GM12878 (cell line): ENCODE measurements at regions of chr4 and their contacts with region 1.

Region 1: GRCh38 chr4:47010912-47011446 is 17.6 kb upstream of the GABRA4 start:
- DNase-seq: peak; percentile 54
- ATAC-seq: peak; percentile 86
- H3K4me3 ChIP-seq: no peak overlapping the region
- H3K27ac ChIP-seq: peak overlapping the region; percentile 8; the same call in 1 of the 2 replicates
- H3K4me1 ChIP-seq: peaks cover 4% of the 10 kb centered on the region; the same call in 1 of the 2 replicates
- H3K27me3 ChIP-seq: no peaks in the 10 kb centered on the region
- CTCF ChIP-seq: no peak
- EP300 ChIP-seq: peak; percentile 38 to 51; a peak in 2 of 4 replicates
- POLR2A ChIP-seq: no peak
- RAD21 ChIP-seq: no peak

Region 2: GRCh38 chr4:46937493-46937892 is 73.5 kb before region 1 on chr4:
- CTCF ChIA-PET with region 1: interaction called, 19 read pairs
- POLR2A ChIA-PET with region 1: no interaction called
- RAD21 ChIA-PET with region 1: interaction called, 18 read pairs
- SMC1A ChIA-PET with region 1: interaction called, 33 read pairs
- in situ Hi-C with region 1: no loop called
- intact Hi-C with region 1: no loop called
- DNase-seq: no peak
- ATAC-seq: 0 out of 3 replicates have a peak, but pooled peaks have one; percentile 42
- H3K4me3 ChIP-seq: no peak overlapping the region
- H3K27ac ChIP-seq: no peak overlapping the region
- H3K4me1 ChIP-seq: no peaks in the 10 kb centered on the region
- H3K27me3 ChIP-seq: no peaks in the 10 kb centered on the region
- CTCF ChIP-seq: peak in 2 of 3 experiments; percentile 12 to 41; a peak in 2 of 6 replicates
- EP300 ChIP-seq: no peak
- POLR2A ChIP-seq: no peak
- RAD21 ChIP-seq: peak; percentile 50

Region 3: DNA sequence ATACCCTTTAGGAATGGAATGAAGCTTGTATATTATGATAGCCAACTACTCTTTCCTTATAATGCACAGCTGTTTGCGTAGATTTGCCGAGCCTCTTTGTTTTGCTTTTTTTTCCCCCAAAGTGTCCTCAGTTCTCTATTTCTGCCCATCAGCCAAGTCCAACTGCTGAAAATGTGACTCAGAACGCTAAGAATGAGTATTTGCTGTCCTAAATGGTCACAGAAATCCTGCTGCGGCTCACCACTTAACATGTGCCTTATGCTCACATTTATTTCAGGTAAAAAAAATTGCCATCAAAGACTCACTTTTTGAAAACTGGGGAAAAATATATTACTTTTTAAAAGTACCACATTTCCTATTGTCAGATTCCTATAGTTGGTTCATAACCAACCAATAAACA is 54.5 kb before region 1 on chr4:
- CTCF ChIA-PET with region 1: no interaction called
- POLR2A ChIA-PET with region 1: interaction called, 11 read pairs
- RAD21 ChIA-PET with region 1: interaction called, 4 read pairs
- SMC1A ChIA-PET with region 1: interaction called, 9 read pairs
- in situ Hi-C with region 1: no loop called
- intact Hi-C with region 1: no loop called
- DNase-seq: no peak
- ATAC-seq: no peak
- H3K4me3 ChIP-seq: no peak overlapping the region
- H3K27ac ChIP-seq: no peak overlapping the region
- H3K4me1 ChIP-seq: no peaks in the 10 kb centered on the region
- H3K27me3 ChIP-seq: no peaks in the 10 kb centered on the region
- CTCF ChIP-seq: no peak
- EP300 ChIP-seq: no peak
- POLR2A ChIP-seq: no peak
- RAD21 ChIP-seq: no peak

Region 4: DNA sequence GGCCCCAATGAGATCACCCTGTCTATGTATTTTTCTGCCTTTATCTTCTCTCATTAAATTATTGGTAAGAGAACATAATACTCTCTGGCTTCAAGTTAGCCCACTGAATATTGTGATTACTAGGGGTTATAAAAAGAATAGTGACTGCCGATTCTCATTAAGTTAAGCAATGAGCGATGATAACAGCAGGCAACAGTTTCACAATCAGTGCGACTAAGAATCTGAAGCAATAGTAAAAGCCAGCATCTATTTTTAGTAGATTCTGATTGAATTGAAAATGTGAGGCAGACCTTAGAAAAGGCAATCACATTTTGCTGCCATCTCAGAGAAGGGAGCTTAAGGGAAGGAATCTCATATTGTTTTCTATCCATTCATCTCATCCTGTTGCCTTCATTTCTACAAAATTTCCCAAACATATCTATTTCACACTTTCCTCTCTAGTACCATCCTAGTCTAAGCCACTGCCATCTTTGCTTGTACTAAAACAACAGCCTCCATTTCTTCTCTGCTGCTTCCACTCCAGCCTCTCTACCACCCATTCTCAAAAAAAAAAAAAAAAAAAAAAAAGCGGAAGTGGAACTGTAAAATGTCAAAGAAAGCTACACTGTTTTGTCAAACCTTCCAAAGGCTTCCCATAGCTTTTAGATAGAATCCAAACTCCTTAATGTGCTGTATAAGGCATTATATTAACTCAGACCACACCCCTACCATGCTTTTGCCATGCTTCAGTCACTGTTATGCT is 35.0 kb before region 1 on chr4:
- CTCF ChIA-PET with region 1: interaction called, 4 read pairs
- POLR2A ChIA-PET with region 1: interaction called, 5 read pairs
- RAD21 ChIA-PET with region 1: interaction called, 30 read pairs
- SMC1A ChIA-PET with region 1: interaction called, 20 read pairs
- in situ Hi-C with region 1: no loop called
- intact Hi-C with region 1: no loop called
- DNase-seq: peak; percentile 23
- ATAC-seq: peak; percentile 75
- H3K4me3 ChIP-seq: no peak overlapping the region
- H3K27ac ChIP-seq: peak overlapping the region; percentile 58
- H3K4me1 ChIP-seq: no peaks in the 10 kb centered on the region
- H3K27me3 ChIP-seq: no peaks in the 10 kb centered on the region; a peak in 1 of 4 replicates
- CTCF ChIP-seq: no peak
- EP300 ChIP-seq: 0 out of 4 replicates have a peak, but pooled peaks of 1 of the 2 experiments have one; percentile 11
- POLR2A ChIP-seq: no peak
- RAD21 ChIP-seq: no peak

Region 5: GRCh38 chr4:46986922-46987638 is 23.9 kb before region 1 on chr4:
- CTCF ChIA-PET with region 1: interaction called, 5 read pairs
- POLR2A ChIA-PET with region 1: interaction called, 6 read pairs
- RAD21 ChIA-PET with region 1: interaction called, 28 read pairs
- SMC1A ChIA-PET with region 1: interaction called, 132 read pairs
- in situ Hi-C with region 1: no loop called
- intact Hi-C with region 1: no loop called
- DNase-seq: no peak
- ATAC-seq: peak; percentile 55; the same call in 2 of the 3 replicates
- H3K4me3 ChIP-seq: no peak overlapping the region
- H3K27ac ChIP-seq: no peak overlapping the region
- H3K4me1 ChIP-seq: no peaks in the 10 kb centered on the region
- H3K27me3 ChIP-seq: no peaks in the 10 kb centered on the region
- CTCF ChIP-seq: no peak
- EP300 ChIP-seq: no peak
- POLR2A ChIP-seq: no peak
- RAD21 ChIP-seq: no peak

Region 6: GRCh38 chr4:46993075-46994006 is 17.6 kb before region 1 on chr4 and contains the start of gene GABRA4:
- CTCF ChIA-PET with region 1: interaction called, 21 read pairs
- POLR2A ChIA-PET with region 1: interaction called, 10 read pairs
- RAD21 ChIA-PET with region 1: interaction called, 28 read pairs
- SMC1A ChIA-PET with region 1: interaction called, 132 read pairs
- in situ Hi-C with region 1: no loop called
- intact Hi-C with region 1: no loop called
- DNase-seq: no peak
- ATAC-seq: peak; percentile 71
- H3K4me3 ChIP-seq: no peak within 1 kb of the TSS
- H3K27ac ChIP-seq: no peak within 1 kb of the TSS
- H3K4me1 ChIP-seq: no peaks in the 10 kb centered on the region
- H3K27me3 ChIP-seq: peaks cover 6 to 9% of the 10 kb centered on the region in 2 experiments
- CTCF ChIP-seq: no peak
- EP300 ChIP-seq: no peak
- POLR2A ChIP-seq: no peak
- RAD21 ChIP-seq: no peak
- polyA plus RNA-seq, gene GABRA4: 1.3 to 2.4 TPM

Region 7: DNA sequence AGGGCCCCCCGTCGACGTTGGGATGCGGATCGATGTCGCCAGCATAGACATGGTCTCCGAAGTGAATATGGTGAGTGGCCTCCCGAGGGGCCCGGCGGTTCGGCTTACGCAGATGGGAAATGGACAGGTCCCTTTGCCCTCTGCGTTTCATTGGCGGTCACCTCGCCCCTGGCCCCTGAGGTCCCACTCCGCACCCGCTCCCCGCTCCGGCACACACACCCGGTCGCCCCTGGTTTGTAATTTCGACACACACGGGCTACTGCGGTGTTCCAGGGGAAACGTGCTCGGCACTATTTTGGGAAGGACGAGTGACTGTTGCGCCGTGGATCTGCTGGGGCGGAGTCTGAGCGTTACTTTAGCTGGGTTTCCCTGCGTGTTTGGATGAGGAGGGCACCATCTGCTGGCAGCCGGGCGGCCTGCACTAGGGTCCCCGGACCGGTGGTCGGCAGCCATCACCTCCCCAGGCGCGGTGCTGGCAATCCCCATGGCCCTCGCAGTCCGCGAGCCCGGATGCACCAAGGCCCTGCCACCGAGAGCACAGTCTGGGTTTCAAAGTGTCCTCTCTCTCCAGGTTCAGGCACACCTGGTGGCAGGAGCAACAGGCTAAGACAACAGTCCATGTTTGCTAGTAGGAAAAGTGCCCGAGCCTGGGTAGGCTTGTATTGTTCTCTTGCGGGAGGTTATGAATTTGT is 21.6 kb after region 1 on chr4:
- CTCF ChIA-PET with region 1: interaction called, 21 read pairs
- POLR2A ChIA-PET with region 1: no interaction called
- RAD21 ChIA-PET with region 1: interaction called, 16 read pairs
- SMC1A ChIA-PET with region 1: interaction called, 6 read pairs
- in situ Hi-C with region 1: no loop called
- intact Hi-C with region 1: no loop called
- DNase-seq: no peak
- ATAC-seq: peak; percentile 98
- H3K4me3 ChIP-seq: peak overlapping the region; percentile 21; the same call in 1 of the 2 replicates
- H3K27ac ChIP-seq: no peak overlapping the region
- H3K4me1 ChIP-seq: no peaks in the 10 kb centered on the region
- H3K27me3 ChIP-seq: peaks cover 2 to 10% of the 10 kb centered on the region in 2 experiments
- CTCF ChIP-seq: peak; percentile 62 to 83 (median 78)
- EP300 ChIP-seq: no peak
- POLR2A ChIP-seq: no peak
- RAD21 ChIP-seq: peak; percentile 71